MCF 10A (cell line): ENCODE measurements at regions of chr7 and their contacts with region 1.

Region 1: GRCh38 chr7:16657656-16658279 is 11.8 kb downstream of the BZW2 start:
- DNase-seq: peak; percentile 83
- H3K4me3 Mint-ChIP-seq: no peak overlapping the region
- H3K27ac Mint-ChIP-seq: peak overlapping the region; percentile 40
- H3K4me1 Mint-ChIP-seq: peaks cover 34% of the 10 kb centered on the region
- H3K27me3 Mint-ChIP-seq: no peaks in the 10 kb centered on the region
- CTCF ChIP-seq: no peak

Region 2: DNA sequence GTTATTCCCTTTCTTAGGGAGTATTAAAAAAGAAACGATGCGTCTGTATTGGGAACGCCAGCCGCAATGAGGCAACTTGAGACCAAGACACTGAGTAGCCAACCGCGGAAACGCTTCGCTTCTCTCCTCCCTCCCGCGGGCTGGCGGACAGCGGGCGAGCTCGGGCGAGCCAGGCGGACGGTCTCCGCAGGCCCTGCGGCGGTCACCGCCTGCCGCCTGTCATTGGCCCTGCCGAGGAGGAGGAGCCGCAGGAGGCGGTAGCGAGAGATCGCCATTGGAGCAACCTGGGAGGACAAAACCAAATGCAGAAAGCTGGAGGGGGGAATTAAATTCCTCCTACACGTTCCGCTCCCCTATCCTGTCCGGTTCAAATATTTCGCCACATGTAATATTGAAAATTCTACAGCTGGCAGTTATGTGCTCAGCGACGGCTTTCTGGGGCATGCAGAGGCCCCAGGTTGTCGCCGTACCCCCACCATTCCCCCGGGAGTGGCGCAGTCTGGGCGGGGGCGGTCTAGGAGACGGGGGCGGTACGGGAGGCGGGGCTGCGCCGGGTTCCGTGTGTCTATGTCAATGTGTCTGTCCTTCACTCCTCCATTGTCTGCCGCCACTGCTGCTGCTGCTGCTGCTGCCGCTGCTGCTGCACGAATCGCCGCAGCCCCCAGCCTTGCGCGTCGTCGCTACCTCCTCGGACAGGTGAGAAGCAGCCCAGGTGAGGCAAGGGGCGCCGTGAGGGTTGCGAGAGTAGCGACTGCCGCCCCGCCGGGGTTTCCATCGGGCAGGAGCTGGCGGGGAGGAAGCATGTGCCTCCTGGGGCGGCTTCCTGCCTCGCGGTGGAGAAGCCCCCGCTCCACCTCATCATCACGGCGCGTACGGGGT is 11.9 kb before region 1 on chr7 and contains the starts of genes ANKMY2 and BZW2:
- CTCF ChIA-PET with region 1: interaction called, 4 read pairs
- POLR2A ChIA-PET with region 1: interaction called, 76 read pairs
- intact Hi-C with region 1: no loop called
- DNase-seq: peak; percentile 96
- H3K4me3 Mint-ChIP-seq: peak within 1 kb of the TSS; percentile 86
- H3K27ac Mint-ChIP-seq: peak within 1 kb of the TSS; percentile 97
- H3K4me1 Mint-ChIP-seq: peaks cover 38% of the 10 kb centered on the region
- H3K27me3 Mint-ChIP-seq: no peaks in the 10 kb centered on the region
- CTCF ChIP-seq: no peak
- total RNA-seq, gene ANKMY2: 14.3 and 15.3 TPM in 2 replicates
- total RNA-seq, gene BZW2: 41.0 and 85.4 TPM in 2 replicates

Region 3: GRCh38 chr7:16668049-16668858 is 10.5 kb after region 1 on chr7:
- CTCF ChIA-PET with region 1: interaction called, 6 read pairs
- POLR2A ChIA-PET with region 1: interaction called, 23 read pairs
- intact Hi-C with region 1: no loop called
- DNase-seq: peak; percentile 97
- H3K4me3 Mint-ChIP-seq: peak overlapping the region; percentile 47
- H3K27ac Mint-ChIP-seq: peak overlapping the region; percentile 95
- H3K4me1 Mint-ChIP-seq: peaks cover 30% of the 10 kb centered on the region
- H3K27me3 Mint-ChIP-seq: no peaks in the 10 kb centered on the region
- CTCF ChIP-seq: no peak